ENCODE measurements at regions of chr10 and their contacts with region 1.

Region 1: DNA sequence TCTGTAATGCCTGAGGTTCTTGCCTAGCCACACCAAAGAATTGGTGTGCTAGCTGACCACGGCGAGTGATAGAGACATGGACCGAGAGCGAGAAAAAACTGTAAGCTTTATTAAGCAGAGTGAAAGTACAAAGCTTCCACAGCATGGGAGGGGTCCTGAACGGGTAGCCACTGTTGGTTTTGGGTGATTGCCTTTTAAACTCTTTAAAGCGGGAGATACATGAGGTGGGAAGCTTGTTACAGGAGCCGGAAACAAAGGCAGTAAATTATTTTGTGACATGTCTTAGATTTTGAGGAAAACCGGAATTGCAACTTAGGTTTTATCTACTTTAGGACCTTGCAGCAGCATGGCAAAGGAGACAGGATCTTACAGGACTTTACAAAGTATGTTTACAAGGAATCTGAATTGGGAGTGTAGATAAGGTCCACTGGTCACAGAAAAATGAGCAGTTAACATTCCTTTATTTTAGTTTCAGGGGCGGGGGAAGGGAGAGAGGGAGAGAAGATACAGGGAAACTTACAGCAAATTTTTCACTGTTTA is 252.7 kb upstream of the MBL2 start:
- DNase-seq: peak; percentile 52
- H3K4me3 ChIP-seq: peak overlapping the region in 2 of 3 experiments; percentile 33 to 73
- H3K27ac ChIP-seq: peak overlapping the region; percentile 23
- H3K4me1 ChIP-seq: peaks cover 18% of the 10 kb centered on the region
- H3K27me3 ChIP-seq: no peaks in the 10 kb centered on the region
- CTCF ChIP-seq: no peak
- POLR2A ChIP-seq: no peak

Region 2: DNA sequence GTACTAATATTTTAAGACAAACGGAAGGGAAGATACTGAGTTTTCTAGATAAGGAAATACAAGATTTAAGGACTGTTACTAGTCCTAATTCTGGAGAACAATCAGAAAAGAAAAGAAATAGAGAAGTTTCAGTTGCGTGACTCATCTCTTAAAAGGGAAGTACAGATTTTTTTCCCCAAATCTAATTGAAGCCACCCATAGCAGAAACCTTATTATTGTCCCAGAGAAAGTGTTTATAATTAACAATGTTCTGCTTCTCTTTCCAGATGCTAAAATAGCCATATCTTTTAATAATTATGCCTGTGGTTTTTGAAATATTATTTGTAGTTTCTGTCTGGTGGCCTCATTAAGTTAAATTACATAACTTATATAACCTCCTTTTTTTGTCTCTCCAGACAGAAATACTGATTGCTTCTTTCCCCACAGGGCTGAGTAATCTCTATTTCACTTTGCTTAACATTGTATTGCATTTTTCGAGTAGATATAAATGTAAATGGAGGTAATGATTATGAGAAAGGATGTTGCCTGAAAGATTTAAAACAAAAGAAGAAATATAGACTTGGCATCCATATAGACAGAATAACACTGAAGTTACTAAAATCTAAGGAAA is 11.9 kb before region 1 on chr10:
- CTCF ChIA-PET with region 1: interaction called, 3 read pairs
- POLR2A ChIA-PET with region 1: no interaction called
- dilution Hi-C with region 1: no loop called
- intact Hi-C with region 1: loop called (anchors 1 kb)
- DNase-seq: peak; percentile 24
- H3K4me3 ChIP-seq: no peak overlapping the region
- H3K27ac ChIP-seq: no peak overlapping the region
- H3K4me1 ChIP-seq: no peaks in the 10 kb centered on the region
- H3K27me3 ChIP-seq: no peaks in the 10 kb centered on the region
- CTCF ChIP-seq: no peak
- POLR2A ChIP-seq: no peak

Region 3: DNA sequence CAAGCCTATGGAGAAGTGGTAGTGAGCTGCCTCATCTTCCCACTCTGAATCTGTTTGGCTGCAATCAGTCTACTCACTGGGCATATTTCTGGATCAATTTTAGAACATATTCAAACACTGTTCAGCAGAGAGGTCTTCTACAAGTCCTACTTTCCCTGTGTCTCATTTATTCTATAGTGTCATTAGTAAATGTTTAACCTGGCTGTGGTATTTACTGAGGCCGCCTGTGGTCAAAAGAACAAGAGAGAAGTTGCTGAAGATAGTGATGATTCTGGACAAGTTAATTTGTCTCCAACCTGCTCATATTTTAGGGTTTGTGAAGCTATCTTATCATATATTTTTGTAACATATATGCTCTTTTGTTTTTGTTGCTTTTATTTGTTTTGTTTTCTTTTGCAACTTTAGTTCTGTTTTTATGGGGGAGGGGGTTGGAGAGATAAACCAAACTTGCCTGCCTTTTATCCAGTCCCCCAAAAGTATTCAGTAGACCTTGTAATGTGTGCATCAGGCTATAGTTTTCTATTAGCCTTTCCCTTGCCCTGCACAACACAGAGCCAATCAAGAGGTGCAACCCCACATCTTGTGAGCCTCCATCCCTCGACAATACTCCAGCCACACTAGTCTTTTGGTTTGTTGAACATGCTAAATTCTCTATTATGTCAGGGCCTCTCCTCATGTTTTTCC is 110.1 kb after region 1 on chr10:
- CTCF ChIA-PET with region 1: no interaction called
- POLR2A ChIA-PET with region 1: no interaction called
- dilution Hi-C with region 1: no loop called
- intact Hi-C with region 1: loop called (anchors 1 kb)
- DNase-seq: no peak
- H3K4me3 ChIP-seq: no peak overlapping the region
- H3K27ac ChIP-seq: no peak overlapping the region
- H3K4me1 ChIP-seq: peaks cover 17% of the 10 kb centered on the region
- H3K27me3 ChIP-seq: peaks cover 10 to 21% of the 10 kb centered on the region in 2 experiments
- CTCF ChIP-seq: no peak
- POLR2A ChIP-seq: no peak